ENCODE measurements at regions of chr3 and their contacts with region 1.

Region 1: GRCh38 chr3:42353632-42354031 is 56.8 kb downstream of the LYZL4 start:
- DNase-seq: no peak
- ATAC-seq: no peak
- H3K4me3 ChIP-seq: no peak overlapping the region
- H3K27ac ChIP-seq: no peak overlapping the region
- H3K4me1 ChIP-seq: no peaks in the 10 kb centered on the region
- H3K27me3 ChIP-seq: no peaks in the 10 kb centered on the region
- CTCF ChIP-seq: no peak

Region 2: DNA sequence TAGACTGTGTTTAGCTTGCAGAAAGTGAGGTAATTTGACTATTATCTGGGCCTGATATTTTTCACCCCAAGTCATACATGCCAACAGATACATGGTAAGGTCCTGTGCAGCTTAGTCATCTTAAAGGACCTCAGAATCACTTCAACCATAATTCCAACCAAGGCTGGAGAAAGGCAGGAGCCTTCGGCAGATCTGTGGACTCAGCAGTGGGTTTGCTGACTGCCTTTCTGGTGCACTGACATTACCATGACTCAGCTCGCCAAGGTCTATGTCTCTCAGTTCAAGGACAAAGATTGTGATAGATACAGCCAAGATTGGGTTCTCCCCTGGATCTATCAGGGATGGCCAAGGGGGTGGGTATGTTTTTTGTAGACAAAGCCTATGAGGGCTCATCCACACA is 24.0 kb after region 1 on chr3:
- CTCF ChIA-PET with region 1: no interaction called
- POLR2A ChIA-PET with region 1: interaction called, 11 read pairs
- in situ Hi-C with region 1: no loop called
- intact Hi-C with region 1: no loop called
- DNase-seq: no peak
- ATAC-seq: no peak
- H3K4me3 ChIP-seq: no peak overlapping the region
- H3K27ac ChIP-seq: no peak overlapping the region
- H3K4me1 ChIP-seq: no peaks in the 10 kb centered on the region
- H3K27me3 ChIP-seq: no peaks in the 10 kb centered on the region
- CTCF ChIP-seq: no peak

Region 3: GRCh38 chr3:42991341-42992315 is 638.0 kb after region 1 on chr3:
- CTCF ChIA-PET with region 1: no interaction called
- POLR2A ChIA-PET with region 1: no interaction called
- in situ Hi-C with region 1: no loop called
- intact Hi-C with region 1: no loop called
- DNase-seq: no peak
- ATAC-seq: no peak
- H3K4me3 ChIP-seq: no peak overlapping the region
- H3K27ac ChIP-seq: no peak overlapping the region
- H3K4me1 ChIP-seq: no peaks in the 10 kb centered on the region
- H3K27me3 ChIP-seq: no peaks in the 10 kb centered on the region
- CTCF ChIP-seq: no peak